ENCODE measurements at regions of chr18 and their contacts with region 1.

Region 1: GRCh38 chr18:32418148-32418547 is 52.5 kb downstream of the GAREM1 start:
- DNase-seq: no peak
- ATAC-seq: no peak
- H3K4me3 Mint-ChIP-seq: no peak overlapping the region
- H3K27ac Mint-ChIP-seq: no peak overlapping the region
- H3K4me1 Mint-ChIP-seq: no peaks in the 10 kb centered on the region
- H3K27me3 Mint-ChIP-seq: peaks cover 5% of the 10 kb centered on the region
- CTCF ChIP-seq: no peak

Region 2: GRCh38 chr18:32366586-32367538 is 51.3 kb before region 1 on chr18:
- CTCF ChIA-PET with region 1: no interaction called
- POLR2A ChIA-PET with region 1: no interaction called
- intact Hi-C with region 1: loop called (anchors 10 kb)
- DNase-seq: no peak
- ATAC-seq: no peak
- H3K4me3 Mint-ChIP-seq: no peak overlapping the region
- H3K27ac Mint-ChIP-seq: no peak overlapping the region
- H3K4me1 Mint-ChIP-seq: no peaks in the 10 kb centered on the region
- H3K27me3 Mint-ChIP-seq: peaks cover 12% of the 10 kb centered on the region
- CTCF ChIP-seq: no peak

Region 3: GRCh38 chr18:32401621-32402020 is 16.5 kb before region 1 on chr18:
- CTCF ChIA-PET with region 1: no interaction called
- POLR2A ChIA-PET with region 1: no interaction called
- intact Hi-C with region 1: no loop called
- DNase-seq: no peak
- ATAC-seq: no peak
- H3K4me3 Mint-ChIP-seq: no peak overlapping the region
- H3K27ac Mint-ChIP-seq: no peak overlapping the region
- H3K4me1 Mint-ChIP-seq: no peaks in the 10 kb centered on the region
- H3K27me3 Mint-ChIP-seq: peaks cover 6% of the 10 kb centered on the region
- CTCF ChIP-seq: no peak

Measured in activated CD8-positive, alpha-beta T cell treated with anti-CD3 and anti-CD28 coated beads for 36 hours (primary cell).